ENCODE measurements at regions of chr18 and their contacts with region 1.

Region 1: DNA sequence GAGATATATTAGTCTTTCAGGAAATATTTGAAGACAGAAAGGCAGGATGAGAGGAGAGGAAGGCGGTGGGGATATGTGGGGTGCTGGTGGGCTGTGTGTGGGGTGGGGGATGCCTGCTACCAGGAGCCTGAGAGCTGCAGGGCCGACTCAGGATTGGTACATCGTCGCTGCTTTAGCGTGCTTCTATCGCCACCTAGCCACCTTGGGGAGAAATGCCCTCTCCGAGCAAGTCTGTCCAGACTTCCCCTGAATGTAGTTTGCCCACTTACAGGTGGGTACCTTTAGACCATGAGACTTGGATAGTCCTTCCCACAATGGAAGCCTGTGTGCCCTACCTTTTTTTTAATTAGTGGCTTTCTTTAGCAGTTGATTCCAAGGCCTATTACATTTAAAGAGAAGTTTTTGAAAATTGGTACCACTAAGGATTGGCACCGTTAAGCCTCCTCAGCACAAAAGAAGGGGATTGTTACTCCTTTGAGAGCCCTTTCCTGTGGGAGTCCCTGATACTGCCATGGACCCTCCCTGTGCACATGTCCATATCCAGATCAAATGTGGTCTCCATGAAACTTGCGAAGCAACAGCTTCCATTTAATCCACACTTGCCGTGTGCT is 114.1 kb upstream of the NDUFV2 start:
- DNase-seq: peak; percentile 59
- H3K4me3 Mint-ChIP-seq: no peak overlapping the region
- H3K27ac Mint-ChIP-seq: no peak overlapping the region
- H3K4me1 Mint-ChIP-seq: no peaks in the 10 kb centered on the region
- H3K27me3 Mint-ChIP-seq: peaks cover 12% of the 10 kb centered on the region

Region 2: GRCh38 chr18:8654503-8655451 is 333.6 kb before region 1 on chr18:
- CTCF ChIA-PET with region 1: interaction called, 28 read pairs
- POLR2A ChIA-PET with region 1: no interaction called
- DNase-seq: no peak
- H3K4me3 Mint-ChIP-seq: no peak overlapping the region
- H3K27ac Mint-ChIP-seq: no peak overlapping the region
- H3K4me1 Mint-ChIP-seq: no peaks in the 10 kb centered on the region
- H3K27me3 Mint-ChIP-seq: peaks cover 31% of the 10 kb centered on the region

Region 3: GRCh38 chr18:8696749-8697211 is 291.6 kb before region 1 on chr18:
- CTCF ChIA-PET with region 1: interaction called, 48 read pairs
- POLR2A ChIA-PET with region 1: no interaction called
- DNase-seq: peak; percentile 76
- H3K4me3 Mint-ChIP-seq: no peak overlapping the region
- H3K27ac Mint-ChIP-seq: no peak overlapping the region
- H3K4me1 Mint-ChIP-seq: no peaks in the 10 kb centered on the region
- H3K27me3 Mint-ChIP-seq: peaks cover 14% of the 10 kb centered on the region

Region 4: DNA sequence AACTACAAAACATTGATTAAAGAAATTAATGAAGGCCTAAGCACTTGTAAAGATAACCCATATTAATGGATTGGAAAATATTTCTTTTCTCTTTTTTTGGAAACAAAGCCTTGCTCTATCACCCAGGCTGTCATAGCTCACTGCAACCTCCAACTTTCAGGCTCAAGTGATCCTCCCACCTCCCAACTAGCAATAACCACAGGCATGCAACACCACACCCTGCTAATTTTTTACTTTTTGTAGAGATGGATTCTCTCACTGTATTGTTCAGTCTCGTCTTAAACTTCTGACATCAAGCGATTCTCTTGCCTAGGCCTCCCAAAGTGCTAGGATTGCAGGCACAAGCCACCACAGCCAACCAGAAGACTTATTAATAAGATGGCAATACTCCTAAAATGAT is 40.8 kb after region 1 on chr18:
- CTCF ChIA-PET with region 1: no interaction called
- POLR2A ChIA-PET with region 1: no interaction called
- DNase-seq: no peak
- H3K4me3 Mint-ChIP-seq: no peak overlapping the region
- H3K27ac Mint-ChIP-seq: no peak overlapping the region
- H3K4me1 Mint-ChIP-seq: peaks cover 5% of the 10 kb centered on the region
- H3K27me3 Mint-ChIP-seq: peaks cover 19% of the 10 kb centered on the region